ENCODE measurements at regions of chr3 and their contacts with region 1.

Region 1: GRCh38 chr3:150183678-150184425 is 213.2 kb upstream of the PFN2 start:
- DNase-seq: peak; percentile 54 to 69
- ATAC-seq: peak; percentile 86 to 97 (median 96)
- H3K4me3 ChIP-seq: peak overlapping the region in 9 of 10 donors; percentile 12 to 57 (median 45)
- H3K27ac ChIP-seq: peak overlapping the region in 5 of 10 donors; percentile 29 to 51 (median 34)
- H3K4me1 ChIP-seq: peaks cover 0 to 21% (median 12%) of the 10 kb centered on the region in 9 donors
- H3K27me3 ChIP-seq: no peaks in the 10 kb centered on the region
- CTCF ChIP-seq: peak; percentile 30 to 86 (median 66)

Region 2: DNA sequence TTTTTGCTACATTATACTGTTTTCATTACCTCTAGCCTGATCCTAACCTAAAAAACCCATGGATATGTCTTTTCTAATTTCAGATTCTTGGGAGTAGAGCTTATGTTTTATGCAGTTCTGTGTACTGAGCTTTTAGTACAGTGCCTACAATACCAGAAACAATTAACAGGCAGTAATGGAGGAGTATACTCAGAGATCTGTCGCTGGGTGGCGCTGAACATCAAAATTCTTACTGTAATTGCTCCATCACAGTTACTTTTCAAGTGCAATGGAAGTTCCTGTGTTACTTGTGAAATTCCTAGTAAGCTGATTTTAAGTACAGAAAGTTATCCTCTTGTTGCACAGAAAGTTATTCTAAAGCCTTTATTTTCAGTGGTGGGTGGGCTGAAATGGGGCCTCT is 304.0 kb before region 1 on chr3:
- intact Hi-C with region 1: loop called in 2 of 10 experiments (anchors 5 to 10 kb)
- DNase-seq: peak; percentile 47 to 55
- ATAC-seq: peak in 6 of 8 donors; percentile 75 to 86 (median 82)
- H3K4me3 ChIP-seq: no peak overlapping the region
- H3K27ac ChIP-seq: no peak overlapping the region
- H3K4me1 ChIP-seq: peaks cover 0 to 18% (median 0%) of the 10 kb centered on the region in 9 donors
- H3K27me3 ChIP-seq: no peaks in the 10 kb centered on the region
- CTCF ChIP-seq: peak in 8 of 9 donors; percentile 19 to 70 (median 60)

Region 3: DNA sequence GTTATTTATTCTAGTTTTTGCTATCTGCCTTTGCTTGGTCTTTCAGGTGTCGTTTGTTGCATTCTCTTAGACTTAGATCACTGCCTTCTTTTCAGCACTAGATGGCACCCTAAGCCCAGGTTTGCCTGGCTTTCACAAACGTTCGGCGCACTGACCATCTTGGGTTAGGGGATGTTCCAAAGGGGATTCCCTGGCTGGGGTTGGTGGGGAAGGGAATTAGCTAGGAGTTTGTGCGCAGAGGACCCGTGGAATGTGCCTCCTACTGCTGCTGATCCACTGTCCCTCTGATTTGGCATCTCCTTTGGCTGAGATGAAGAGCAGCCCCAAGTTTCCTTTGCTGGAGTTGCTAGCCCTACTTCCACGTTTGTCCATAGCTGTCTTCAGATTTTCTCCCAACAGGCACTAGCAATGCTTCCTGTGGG is 247.0 kb before region 1 on chr3:
- intact Hi-C with region 1: loop called in 3 of 10 experiments (anchors 10 kb)
- DNase-seq: peak; percentile 22 to 30
- ATAC-seq: peak; percentile 56 to 82 (median 77)
- H3K4me3 ChIP-seq: peak overlapping the region in 1 of 10 donors; percentile 5
- H3K27ac ChIP-seq: no peak overlapping the region
- H3K4me1 ChIP-seq: peaks cover 0 to 25% (median 7%) of the 10 kb centered on the region in 9 donors
- H3K27me3 ChIP-seq: no peaks in the 10 kb centered on the region
- CTCF ChIP-seq: peak; percentile 51 to 87 (median 75)

Region 4: GRCh38 chr3:150074277-150074676 is 109.6 kb before region 1 on chr3:
- intact Hi-C with region 1: no loop called
- DNase-seq: no peak
- ATAC-seq: no peak
- H3K4me3 ChIP-seq: no peak overlapping the region
- H3K27ac ChIP-seq: no peak overlapping the region
- H3K4me1 ChIP-seq: peaks cover 0 to 26% (median 11%) of the 10 kb centered on the region in 9 donors
- H3K27me3 ChIP-seq: no peaks in the 10 kb centered on the region
- CTCF ChIP-seq: no peak

Region 5: DNA sequence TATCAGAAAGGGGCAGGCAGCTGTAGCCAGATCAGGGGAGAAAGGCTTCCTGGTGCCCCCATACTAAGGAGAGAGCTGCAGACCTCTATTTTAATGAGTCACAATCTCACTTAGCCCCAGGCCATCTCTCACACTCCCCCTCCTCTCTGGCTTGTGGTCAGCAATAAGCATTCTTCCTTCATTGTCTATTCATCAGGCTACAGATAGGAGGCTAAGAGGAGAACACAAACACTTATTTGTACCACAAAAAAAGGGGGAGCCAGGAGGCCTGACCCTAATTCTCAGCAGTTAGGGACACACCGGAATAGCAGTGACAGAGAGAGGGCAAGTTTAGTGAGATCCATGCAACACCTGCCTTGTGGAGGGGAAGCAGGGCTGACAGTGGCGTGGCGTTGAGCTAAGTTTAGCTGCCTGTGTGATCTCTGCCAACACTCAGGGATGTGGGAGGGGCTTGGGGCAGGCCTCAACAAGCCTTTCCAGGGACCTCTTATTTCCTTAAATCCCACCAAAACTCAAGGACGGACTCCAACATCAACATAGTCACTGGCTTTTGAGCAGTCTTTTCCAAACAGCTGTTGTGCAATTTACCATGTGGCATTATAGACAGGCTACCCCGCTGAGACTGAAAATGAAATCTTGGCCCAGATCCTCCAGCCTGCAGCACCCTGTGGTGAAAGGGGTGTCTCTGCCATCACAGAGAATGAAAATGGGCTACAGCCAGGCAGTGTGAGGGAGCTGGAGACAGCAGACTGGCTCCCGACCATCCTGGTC is 32.4 kb after region 1 on chr3:
- intact Hi-C with region 1: loop called in 1 of 10 experiments (anchors 5 kb)
- DNase-seq: peak; percentile 41 to 70
- ATAC-seq: peak; percentile 83 to 97 (median 92)
- H3K4me3 ChIP-seq: no peak overlapping the region
- H3K27ac ChIP-seq: peak overlapping the region in 8 of 10 donors; percentile 14 to 68 (median 44)
- H3K4me1 ChIP-seq: peaks cover 0 to 24% (median 17%) of the 10 kb centered on the region in 9 donors
- H3K27me3 ChIP-seq: peaks cover 0 to 6% (median 0%) of the 10 kb centered on the region in 7 donors
- CTCF ChIP-seq: no peak